Left ventricle myocardium superior (tissue), 1 donor: ENCODE measurements at regions of chr1 and their contacts with region 1.

Region 1: DNA sequence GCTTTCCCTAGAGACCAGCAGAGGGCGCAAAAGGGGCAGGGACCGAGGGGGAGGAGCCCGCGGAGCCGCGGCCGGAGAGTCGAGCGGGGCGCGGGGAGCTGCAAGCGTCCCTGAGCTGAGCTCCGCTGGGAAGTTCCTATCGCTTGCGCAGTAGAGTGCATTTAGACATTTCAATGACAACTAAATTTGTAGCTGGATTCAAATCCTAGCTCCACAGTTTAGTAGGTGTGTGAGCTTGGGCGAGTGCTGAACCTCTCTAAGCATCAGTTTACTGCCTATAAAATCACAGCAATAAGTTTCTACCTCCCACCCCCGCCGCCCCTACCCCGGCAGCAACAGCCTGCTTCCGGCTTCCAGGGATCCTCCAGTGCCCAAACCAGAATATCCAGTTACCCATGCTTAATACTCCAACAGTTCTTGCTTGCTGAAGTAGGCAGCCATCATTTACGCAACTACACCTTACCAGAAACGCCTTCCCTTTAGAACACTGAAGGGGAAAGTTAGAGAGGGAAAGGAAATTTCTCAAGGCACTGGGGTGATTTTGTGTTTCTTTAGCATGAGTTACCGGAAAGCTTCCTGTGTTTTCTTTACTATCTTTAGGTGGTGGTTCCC is 9.1 kb downstream of the TLR5 start:
- DNase-seq: peak; percentile 91
- ATAC-seq: peak; percentile 91

Region 2: GRCh38 chr1:223161321-223161720 is 27.4 kb after region 1 on chr1:
- intact Hi-C with region 1: no loop called
- DNase-seq: no peak
- ATAC-seq: no peak

Region 3: DNA sequence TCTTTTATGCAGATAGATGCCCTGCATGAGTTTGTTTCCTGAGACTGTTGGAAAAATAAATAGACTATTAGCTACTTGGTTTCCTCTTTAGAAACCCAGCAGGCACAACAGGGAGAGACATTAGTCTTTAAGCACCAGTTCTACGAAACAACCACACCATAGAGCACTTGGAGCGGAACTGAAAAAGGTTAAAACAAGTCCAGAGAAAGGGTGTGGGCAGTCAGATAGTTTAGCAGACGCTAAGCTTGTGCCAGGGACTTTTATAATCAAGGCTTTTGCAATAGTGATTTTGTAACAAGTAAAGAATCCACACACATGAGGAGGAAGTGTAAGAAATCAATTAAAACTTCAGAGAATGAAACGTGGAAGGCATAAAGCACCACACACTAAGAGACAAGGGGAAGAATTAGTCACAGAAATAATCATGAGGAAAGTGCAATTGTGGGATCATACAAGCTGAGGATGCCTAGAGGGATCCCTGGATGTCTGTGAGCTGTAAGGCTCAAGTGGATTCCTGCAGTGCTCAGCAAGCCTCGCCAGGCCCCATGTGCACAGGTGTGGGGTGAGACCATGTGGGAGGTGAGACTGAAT is 46.9 kb after region 1 on chr1:
- intact Hi-C with region 1: no loop called
- DNase-seq: no peak
- ATAC-seq: peak; percentile 87

Region 4: GRCh38 chr1:223683586-223684487 is 549.9 kb after region 1 on chr1:
- intact Hi-C with region 1: loop called (anchors 10 kb)
- DNase-seq: peak; percentile 44
- ATAC-seq: peak; percentile 41